ENCODE measurements at regions of chr5 and their contacts with region 1.

Region 1: GRCh38 chr5:136053336-136054141 is 24.8 kb downstream of the TGFBI start:
- DNase-seq: peak; percentile 87 to 93
- H3K4me3 ChIP-seq: no peak overlapping the region
- H3K4me3 Mint-ChIP-seq: peak overlapping the region; percentile 42
- H3K27ac Mint-ChIP-seq: peak overlapping the region; percentile 89
- H3K4me1 ChIP-seq: peaks cover 70% of the 10 kb centered on the region
- H3K4me1 Mint-ChIP-seq: peaks cover 42% of the 10 kb centered on the region
- H3K27me3 ChIP-seq: no peaks in the 10 kb centered on the region
- H3K27me3 Mint-ChIP-seq: no peaks in the 10 kb centered on the region
- CTCF ChIP-seq: no peak

Region 2: DNA sequence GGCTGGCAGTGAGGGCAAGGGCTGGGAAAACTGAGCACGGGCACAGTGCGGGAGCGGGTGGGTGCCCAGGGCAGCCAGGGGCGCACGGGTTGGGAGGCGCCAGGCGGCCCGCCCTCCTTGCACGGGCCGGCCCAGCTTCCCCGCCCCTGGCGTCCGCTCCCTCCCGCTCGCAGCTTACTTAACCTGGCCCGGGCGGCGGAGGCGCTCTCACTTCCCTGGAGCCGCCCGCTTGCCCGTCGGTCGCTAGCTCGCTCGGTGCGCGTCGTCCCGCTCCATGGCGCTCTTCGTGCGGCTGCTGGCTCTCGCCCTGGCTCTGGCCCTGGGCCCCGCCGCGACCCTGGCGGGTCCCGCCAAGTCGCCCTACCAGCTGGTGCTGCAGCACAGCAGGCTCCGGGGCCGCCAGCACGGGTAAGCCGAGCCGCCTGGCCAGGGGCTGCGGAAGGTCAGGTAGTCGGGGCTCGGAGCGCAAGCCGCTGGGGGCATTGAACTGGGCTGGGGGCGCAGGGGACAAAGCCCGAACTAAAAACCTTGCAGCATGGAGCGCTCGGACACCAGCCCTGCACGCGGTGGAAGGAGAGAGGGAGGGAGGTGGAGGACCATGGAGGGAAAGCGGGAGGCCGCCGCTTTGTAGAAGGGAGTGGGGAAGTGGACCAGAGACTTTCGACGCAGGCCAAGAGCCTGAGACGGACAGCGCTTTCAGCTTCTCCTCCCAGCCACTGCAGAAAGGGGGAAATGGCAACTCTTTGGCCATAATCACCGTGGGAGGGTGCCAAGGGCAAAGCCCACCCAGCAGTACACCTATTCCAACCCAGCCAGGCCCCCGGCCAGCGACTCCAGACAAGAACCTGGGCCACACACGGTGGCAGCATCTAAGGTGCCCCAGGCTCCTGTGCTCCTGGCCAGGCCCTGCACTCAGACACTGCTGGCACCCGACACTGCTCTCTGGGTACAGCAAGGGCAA is 24.5 kb before region 1 on chr5 and contains the start of gene TGFBI:
- CTCF ChIA-PET with region 1: interaction called, 4 read pairs
- POLR2A ChIA-PET with region 1: interaction called, 4 read pairs
- intact Hi-C with region 1: loop called (anchors 1 kb)
- DNase-seq: peak; percentile 71 to 82
- H3K4me3 ChIP-seq: peak within 1 kb of the TSS; percentile 58
- H3K4me3 Mint-ChIP-seq: peak within 1 kb of the TSS; percentile 74
- H3K27ac Mint-ChIP-seq: no peak within 1 kb of the TSS
- H3K4me1 ChIP-seq: peaks cover 16% of the 10 kb centered on the region; the same call in 1 of the 2 replicates
- H3K4me1 Mint-ChIP-seq: peaks cover 7% of the 10 kb centered on the region
- H3K27me3 ChIP-seq: no peaks in the 10 kb centered on the region
- H3K27me3 Mint-ChIP-seq: no peaks in the 10 kb centered on the region
- CTCF ChIP-seq: peak in 1 of 2 experiments; percentile 44
- total RNA-seq, gene TGFBI: 131 and 142 TPM in 2 replicates

Measured in Caco-2 (cell line).